ENCODE measurements at regions of chr1 and their contacts with region 1.

Region 1: GRCh38 chr1:85307987-85308832 is 31.8 kb upstream of the BCL10 start:
- DNase-seq: no peak
- H3K4me3 ChIP-seq: no peak overlapping the region
- H3K27me3 ChIP-seq: no peaks in the 10 kb centered on the region
- CTCF ChIP-seq: peak; percentile 98

Region 2: GRCh38 chr1:85297855-85298629 is 10.2 kb before region 1 on chr1:
- CTCF ChIA-PET with region 1: interaction called, 14 read pairs
- POLR2A ChIA-PET with region 1: no interaction called
- DNase-seq: peak; percentile 97
- H3K4me3 ChIP-seq: no peak overlapping the region
- H3K27me3 ChIP-seq: no peaks in the 10 kb centered on the region
- CTCF ChIP-seq: no peak

Region 3: DNA sequence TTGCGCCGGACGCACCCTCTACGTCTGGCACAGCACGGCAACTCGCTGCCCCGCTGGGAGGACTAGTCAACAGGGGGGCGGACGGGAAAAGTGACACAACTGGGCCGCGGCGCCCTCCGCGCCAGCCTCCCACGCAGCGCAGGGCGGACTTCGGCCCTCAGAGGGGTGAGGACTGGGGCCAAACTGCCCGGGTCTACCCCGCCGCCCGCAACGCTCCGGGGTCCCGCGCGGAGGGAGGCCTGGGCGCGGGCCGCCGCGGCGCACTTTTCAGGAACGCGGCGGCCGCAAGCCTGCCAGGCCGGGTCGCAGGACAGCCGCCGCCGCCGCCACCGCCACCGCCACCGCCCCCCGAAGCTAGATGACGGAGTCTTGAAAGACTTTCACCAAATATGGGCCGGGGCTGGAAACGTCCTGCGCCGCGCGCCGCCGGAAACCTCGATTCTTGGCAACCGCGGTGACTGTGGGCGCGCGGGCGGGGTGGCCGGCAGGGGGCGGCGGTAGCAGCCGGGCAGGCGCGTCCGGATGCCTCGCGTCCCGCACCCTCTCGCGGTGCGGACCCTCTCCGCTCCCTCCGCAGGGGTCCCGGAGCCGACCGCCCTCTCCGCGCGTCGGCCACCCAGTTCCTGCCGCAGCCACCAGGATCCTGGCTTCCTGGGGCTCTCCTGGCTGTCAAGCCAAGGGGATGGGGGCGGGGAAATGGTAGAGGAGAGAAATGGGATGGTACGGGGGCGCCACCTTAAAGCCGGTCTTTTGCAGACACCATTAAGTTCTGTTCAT is 268.6 kb after region 1 on chr1:
- CTCF ChIA-PET with region 1: interaction called, 35 read pairs
- POLR2A ChIA-PET with region 1: no interaction called
- DNase-seq: no peak
- H3K4me3 ChIP-seq: peak overlapping the region; percentile 76
- H3K27me3 ChIP-seq: no peaks in the 10 kb centered on the region
- CTCF ChIP-seq: peak; percentile 36

Region 4: GRCh38 chr1:85607126-85607912 is 299.1 kb after region 1 on chr1:
- CTCF ChIA-PET with region 1: interaction called, 20 read pairs
- POLR2A ChIA-PET with region 1: interaction called, 4 read pairs
- DNase-seq: peak; percentile 99
- H3K4me3 ChIP-seq: no peak overlapping the region
- H3K27me3 ChIP-seq: no peaks in the 10 kb centered on the region
- CTCF ChIP-seq: no peak

Region 5: DNA sequence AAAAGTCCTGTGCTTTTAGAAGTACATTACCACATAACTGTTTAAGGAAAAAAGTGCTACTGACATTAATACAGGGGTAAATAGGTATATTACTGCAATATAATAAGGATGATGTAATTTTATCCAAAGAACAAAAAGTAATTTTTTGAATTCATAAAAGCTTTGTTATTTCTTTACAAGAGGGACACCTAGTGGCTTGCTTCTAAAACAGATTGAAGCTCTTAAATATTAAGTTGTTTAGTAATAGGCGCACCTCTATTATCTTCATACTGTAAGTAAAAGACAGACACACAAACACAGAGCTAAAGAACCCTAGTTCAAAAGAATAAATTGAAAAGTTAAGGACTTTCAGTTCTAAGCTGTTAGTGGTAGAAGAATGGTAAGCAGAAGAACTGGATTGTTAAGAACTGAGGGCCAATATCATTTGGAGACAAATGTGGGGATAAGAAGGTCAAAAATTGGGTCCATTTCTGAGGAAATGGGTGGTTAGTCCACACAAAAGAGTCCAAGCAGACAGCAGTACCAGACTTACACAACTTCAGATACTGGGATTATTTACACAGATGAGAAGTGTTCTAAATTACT is 384.6 kb after region 1 on chr1:
- CTCF ChIA-PET with region 1: interaction called, 52 read pairs
- POLR2A ChIA-PET with region 1: no interaction called
- DNase-seq: peak; percentile 28
- H3K4me3 ChIP-seq: no peak overlapping the region
- H3K27me3 ChIP-seq: no peaks in the 10 kb centered on the region
- CTCF ChIP-seq: peak; percentile 43

Measured in BJ (cell line).